ENCODE measurements at regions of chr2 and their contacts with region 1.

Region 1: DNA sequence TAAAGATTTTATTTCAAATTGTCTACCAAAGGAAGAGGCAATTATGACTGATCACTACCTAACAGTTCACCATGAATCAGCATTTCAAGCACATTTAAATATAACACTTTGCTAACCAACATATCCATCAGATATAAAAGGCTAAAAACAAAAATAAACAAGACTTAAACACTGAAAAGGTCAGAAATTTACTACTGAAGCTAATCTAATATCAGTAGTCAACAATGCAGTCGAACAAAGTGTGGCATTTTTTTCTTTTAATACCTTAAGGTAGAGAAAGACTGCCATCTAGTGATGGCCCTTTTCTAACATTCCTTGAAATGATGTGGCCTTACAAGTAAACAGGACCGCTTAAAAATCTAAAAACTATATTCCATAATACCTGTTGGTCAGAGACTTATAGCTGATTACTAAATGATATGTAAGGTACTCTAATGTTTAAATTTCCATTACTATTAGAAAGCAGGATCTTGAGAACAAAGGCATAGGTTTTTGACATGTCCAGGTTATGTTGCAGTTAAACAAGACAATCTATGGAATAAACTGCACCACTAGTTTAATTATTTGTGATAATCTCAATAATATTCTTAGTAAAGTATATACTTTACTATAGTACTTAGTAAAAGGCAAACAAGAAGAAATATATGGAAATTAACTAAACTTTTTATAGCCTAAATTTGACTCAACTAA is 80.0 kb downstream of the EXOC6B start:
- DNase-seq: peak; percentile 88
- H3K4me3 ChIP-seq: no peak overlapping the region
- H3K27ac ChIP-seq: no peak overlapping the region
- H3K4me1 ChIP-seq: no peaks in the 10 kb centered on the region
- H3K27me3 ChIP-seq: no peaks in the 10 kb centered on the region
- CTCF ChIP-seq: peak; percentile 37 to 50
- POLR2A ChIP-seq: no peak

Region 2: GRCh38 chr2:71545572-71546274 is 1200.1 kb before region 1 on chr2:
- CTCF ChIA-PET with region 1: no interaction called
- POLR2A ChIA-PET with region 1: no interaction called
- dilution Hi-C with region 1: no loop called
- intact Hi-C with region 1: loop called (anchors 10 kb)
- DNase-seq: peak; percentile 74
- H3K4me3 ChIP-seq: peak overlapping the region in 1 of 3 experiments; percentile 7
- H3K27ac ChIP-seq: no peak overlapping the region
- H3K4me1 ChIP-seq: peaks cover 11% of the 10 kb centered on the region
- H3K27me3 ChIP-seq: no peaks in the 10 kb centered on the region
- CTCF ChIP-seq: peak; percentile 64 to 72
- POLR2A ChIP-seq: no peak

Region 3: GRCh38 chr2:72605836-72606442 is 139.9 kb before region 1 on chr2:
- CTCF ChIA-PET with region 1: interaction called, 13 read pairs
- POLR2A ChIA-PET with region 1: no interaction called
- dilution Hi-C with region 1: no loop called
- intact Hi-C with region 1: no loop called
- DNase-seq: peak; percentile 43
- H3K4me3 ChIP-seq: no peak overlapping the region
- H3K27ac ChIP-seq: no peak overlapping the region
- H3K4me1 ChIP-seq: no peaks in the 10 kb centered on the region
- H3K27me3 ChIP-seq: no peaks in the 10 kb centered on the region
- CTCF ChIP-seq: peak; percentile 38 to 43
- POLR2A ChIP-seq: no peak

Region 4: DNA sequence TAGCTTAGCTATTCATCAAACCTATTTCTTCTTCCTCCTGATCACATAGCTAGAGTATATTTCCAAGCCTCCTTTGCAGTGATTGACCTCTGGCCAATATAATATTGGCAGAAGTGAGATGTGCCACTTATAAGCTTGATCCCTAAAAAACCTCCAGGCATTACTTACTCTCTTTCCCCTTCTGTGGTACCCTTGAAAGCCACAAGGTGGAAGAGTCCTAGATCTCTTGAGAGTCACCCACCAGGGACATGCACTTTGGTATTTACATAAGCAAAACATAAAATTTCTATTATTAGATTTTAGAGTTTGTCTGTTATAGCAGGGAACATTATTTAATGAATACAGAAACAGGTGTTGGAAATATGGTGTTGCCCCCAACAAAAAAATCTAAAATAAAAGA is 32.0 kb before region 1 on chr2:
- CTCF ChIA-PET with region 1: interaction called, 7 read pairs
- POLR2A ChIA-PET with region 1: no interaction called
- dilution Hi-C with region 1: no loop called
- intact Hi-C with region 1: loop called (anchors 5 kb)
- DNase-seq: no peak
- H3K4me3 ChIP-seq: no peak overlapping the region
- H3K27ac ChIP-seq: no peak overlapping the region
- H3K4me1 ChIP-seq: no peaks in the 10 kb centered on the region
- H3K27me3 ChIP-seq: no peaks in the 10 kb centered on the region
- CTCF ChIP-seq: peak in 1 of 2 donors; percentile 10
- POLR2A ChIP-seq: no peak

Region 5: GRCh38 chr2:72719416-72719815 is 26.4 kb before region 1 on chr2:
- CTCF ChIA-PET with region 1: interaction called, 4 read pairs
- POLR2A ChIA-PET with region 1: no interaction called
- dilution Hi-C with region 1: no loop called
- intact Hi-C with region 1: loop called (anchors 2 kb)
- DNase-seq: peak; percentile 88
- H3K4me3 ChIP-seq: peak overlapping the region in 1 of 3 experiments; percentile 27
- H3K27ac ChIP-seq: peak overlapping the region; percentile 78
- H3K4me1 ChIP-seq: peaks cover 17% of the 10 kb centered on the region
- H3K27me3 ChIP-seq: no peaks in the 10 kb centered on the region
- CTCF ChIP-seq: no peak
- POLR2A ChIP-seq: no peak

Measured in endothelial cell of umbilical vein (primary cell).